ENCODE measurements at regions of chr7 and their contacts with region 1.

Region 1: GRCh38 chr7:24959735-24960485 is 20.1 kb downstream of the OSBPL3 start:
- DNase-seq: no peak
- ATAC-seq: no peak
- H3K4me3 Mint-ChIP-seq: no peak overlapping the region
- H3K27ac Mint-ChIP-seq: no peak overlapping the region
- H3K4me1 Mint-ChIP-seq: peaks cover 63% of the 10 kb centered on the region
- H3K27me3 Mint-ChIP-seq: no peaks in the 10 kb centered on the region
- CTCF ChIP-seq: no peak

Region 2: DNA sequence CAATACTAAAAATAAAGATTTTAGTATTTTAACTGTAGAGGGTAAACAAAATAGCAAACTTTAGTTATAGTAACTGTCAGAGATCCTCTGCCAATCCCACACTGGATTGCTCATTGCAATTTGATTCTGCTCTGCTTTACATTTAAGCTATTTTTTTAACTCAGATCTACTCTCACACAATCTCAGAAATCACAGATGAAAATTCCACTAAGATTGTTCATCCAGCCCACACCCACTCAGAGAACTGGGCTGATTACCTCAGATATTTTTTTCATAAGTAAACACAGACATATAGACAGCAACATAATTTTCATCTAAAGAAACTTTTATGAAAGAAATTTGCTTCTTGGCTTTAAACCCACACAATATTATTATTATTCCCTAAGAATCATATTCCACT is 13.1 kb after region 1 on chr7:
- CTCF ChIA-PET with region 1: no interaction called
- POLR2A ChIA-PET with region 1: interaction called, 4 read pairs
- intact Hi-C with region 1: loop called (anchors 1 kb)
- DNase-seq: no peak
- ATAC-seq: no peak
- H3K4me3 Mint-ChIP-seq: no peak overlapping the region
- H3K27ac Mint-ChIP-seq: no peak overlapping the region
- H3K4me1 Mint-ChIP-seq: peaks cover 28% of the 10 kb centered on the region
- H3K27me3 Mint-ChIP-seq: no peaks in the 10 kb centered on the region
- CTCF ChIP-seq: no peak